ENCODE measurements at regions of chr7 and their contacts with region 1.

Region 1: GRCh38 chr7:7566651-7567611 is at the start of gene MIOS:
- DNase-seq: peak; percentile 82
- ATAC-seq: peak; percentile 89
- H3K4me3 Mint-ChIP-seq: peak within 1 kb of the TSS; percentile 86
- H3K27ac Mint-ChIP-seq: peak within 1 kb of the TSS; percentile 95
- H3K4me1 Mint-ChIP-seq: peaks cover 30% of the 10 kb centered on the region
- H3K27me3 Mint-ChIP-seq: no peaks in the 10 kb centered on the region
- total RNA-seq, gene MIOS: 37.1 to 39.8 TPM

Region 2: DNA sequence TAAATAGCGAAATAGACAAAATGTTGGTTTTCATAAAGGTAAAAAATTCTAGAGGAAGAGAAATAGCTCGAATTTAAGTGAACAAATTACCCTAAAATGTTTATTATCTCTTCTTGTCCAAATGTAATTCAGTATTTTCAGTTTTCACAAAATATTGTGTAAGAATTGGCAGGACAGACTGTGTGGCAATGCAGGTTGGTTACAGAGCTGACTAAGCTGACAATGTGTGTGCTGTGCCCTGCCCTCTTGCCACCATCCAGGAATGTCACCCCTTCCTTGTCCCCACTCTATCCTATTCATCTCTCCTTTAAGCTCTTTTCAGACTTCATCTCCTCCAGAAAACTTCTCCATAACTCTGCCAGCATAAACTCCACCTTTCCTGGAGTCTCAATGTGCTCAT is 77.4 kb before region 1 on chr7:
- CTCF ChIA-PET with region 1: no interaction called
- POLR2A ChIA-PET with region 1: no interaction called
- DNase-seq: no peak
- ATAC-seq: no peak
- H3K4me3 Mint-ChIP-seq: no peak overlapping the region
- H3K27ac Mint-ChIP-seq: no peak overlapping the region
- H3K4me1 Mint-ChIP-seq: no peaks in the 10 kb centered on the region
- H3K27me3 Mint-ChIP-seq: no peaks in the 10 kb centered on the region

Region 3: GRCh38 chr7:7535691-7536090 is 31.2 kb before region 1 on chr7 and contains the start of gene COL28A1:
- CTCF ChIA-PET with region 1: no interaction called
- POLR2A ChIA-PET with region 1: no interaction called
- DNase-seq: no peak
- ATAC-seq: no peak
- H3K4me3 Mint-ChIP-seq: no peak within 1 kb of the TSS
- H3K27ac Mint-ChIP-seq: no peak within 1 kb of the TSS
- H3K4me1 Mint-ChIP-seq: no peaks in the 10 kb centered on the region
- H3K27me3 Mint-ChIP-seq: peaks cover 6% of the 10 kb centered on the region
- total RNA-seq, gene COL28A1: not detected

Region 4: DNA sequence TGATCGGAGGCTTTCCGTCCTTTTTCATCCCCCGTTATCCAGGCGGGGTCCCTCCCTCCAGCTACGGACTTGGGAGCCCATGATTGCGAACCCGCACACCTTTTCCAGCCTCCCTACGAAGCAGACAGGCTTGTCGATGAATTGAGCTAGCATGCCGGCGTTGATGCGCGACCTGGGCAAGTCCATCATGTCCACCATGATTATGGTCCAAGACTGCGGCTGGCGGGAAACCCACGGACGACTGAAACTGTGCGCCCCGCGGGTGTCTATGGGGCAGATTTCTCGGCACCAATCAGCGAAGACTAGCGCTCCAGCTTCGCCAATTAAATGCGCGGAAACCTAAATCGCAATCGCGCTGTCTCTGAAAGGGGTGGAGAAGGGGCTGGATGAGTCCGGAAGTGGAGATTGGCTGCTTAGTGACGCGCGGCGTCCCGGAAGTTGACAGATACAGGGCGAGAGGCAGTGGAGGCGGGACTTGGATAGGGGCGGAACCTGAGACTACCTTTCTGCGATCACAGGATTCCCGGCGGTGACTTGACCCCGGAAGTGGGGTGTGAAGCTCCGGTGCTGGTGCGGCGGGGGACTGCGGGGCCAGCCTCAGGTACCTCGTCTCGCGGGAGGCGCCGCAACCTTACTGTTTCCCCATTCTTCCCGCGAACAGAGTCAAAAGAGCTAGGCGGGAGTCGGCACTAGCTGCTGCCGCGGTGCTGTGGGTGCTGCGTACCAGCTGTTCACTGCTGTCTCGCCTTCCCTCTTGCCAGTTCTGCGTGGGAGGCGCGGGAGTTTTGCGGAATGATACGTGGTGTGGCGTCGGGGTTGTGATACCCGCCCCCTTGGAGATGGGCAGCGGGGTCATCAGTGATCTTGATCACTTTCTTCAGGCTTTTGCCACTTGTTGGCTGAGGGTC is 73.5 kb after region 1 on chr7 and contains the start of gene UMAD1:
- CTCF ChIA-PET with region 1: interaction called, 4 read pairs
- POLR2A ChIA-PET with region 1: interaction called, 25 read pairs
- DNase-seq: peak; percentile 99
- ATAC-seq: peak; percentile 96
- H3K4me3 Mint-ChIP-seq: peak within 1 kb of the TSS; percentile 86
- H3K27ac Mint-ChIP-seq: peak within 1 kb of the TSS; percentile 97
- H3K4me1 Mint-ChIP-seq: peaks cover 33% of the 10 kb centered on the region
- H3K27me3 Mint-ChIP-seq: no peaks in the 10 kb centered on the region
- total RNA-seq, gene UMAD1: 11.9 to 12.3 TPM

Region 5: GRCh38 chr7:7816084-7816483 is 249.2 kb after region 1 on chr7:
- CTCF ChIA-PET with region 1: no interaction called
- POLR2A ChIA-PET with region 1: no interaction called
- DNase-seq: peak; percentile 41
- ATAC-seq: peak; percentile 80
- H3K4me3 Mint-ChIP-seq: peak overlapping the region; percentile 8
- H3K27ac Mint-ChIP-seq: peak overlapping the region; percentile 58
- H3K4me1 Mint-ChIP-seq: peaks cover 30% of the 10 kb centered on the region
- H3K27me3 Mint-ChIP-seq: no peaks in the 10 kb centered on the region

Measured in activated CD8-positive, alpha-beta T cell treated with anti-CD3 and anti-CD28 coated beads, Interleukin-2, amount 10 ng/mL, durations not matched to agents 7 days and 5 days (primary cell).